HEK293 (cell line): ENCODE measurements at regions of chr1 and their contacts with region 1.

Region 1: DNA sequence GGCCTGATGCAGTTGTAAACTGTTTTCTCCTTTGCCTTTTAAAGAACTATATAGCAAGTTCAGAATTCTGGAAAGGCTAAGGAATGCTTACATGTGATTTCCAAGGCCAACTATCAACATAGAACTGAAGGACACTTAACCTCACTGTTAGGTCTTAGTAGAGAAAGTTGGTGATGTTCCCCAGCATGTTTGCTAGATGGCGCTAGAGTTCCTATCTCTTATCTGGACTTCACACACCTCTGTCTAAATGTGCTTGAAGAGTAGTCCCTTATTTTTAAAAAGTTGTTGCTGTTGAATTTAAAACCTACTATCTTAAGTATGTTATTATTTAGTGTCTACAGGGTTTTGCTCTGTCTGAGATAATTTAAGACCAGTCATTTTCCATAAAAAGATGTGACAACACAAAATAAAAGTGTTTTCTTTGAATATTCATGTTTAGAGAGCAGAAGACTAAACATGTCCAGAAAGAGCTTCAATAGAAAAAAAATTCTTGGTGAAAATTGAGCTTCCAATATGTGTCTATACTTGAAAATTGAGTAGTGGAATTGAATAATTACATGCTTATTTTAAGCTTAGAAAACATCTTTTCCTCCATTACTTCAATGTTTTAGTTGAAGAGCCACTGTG is 237.3 kb downstream of the S1PR1 start:
- H3K4me3 ChIP-seq: no peak overlapping the region
- H3K27ac ChIP-seq: no peak overlapping the region
- H3K4me1 ChIP-seq: no peaks in the 10 kb centered on the region
- CTCF ChIP-seq: no peak

Region 2: DNA sequence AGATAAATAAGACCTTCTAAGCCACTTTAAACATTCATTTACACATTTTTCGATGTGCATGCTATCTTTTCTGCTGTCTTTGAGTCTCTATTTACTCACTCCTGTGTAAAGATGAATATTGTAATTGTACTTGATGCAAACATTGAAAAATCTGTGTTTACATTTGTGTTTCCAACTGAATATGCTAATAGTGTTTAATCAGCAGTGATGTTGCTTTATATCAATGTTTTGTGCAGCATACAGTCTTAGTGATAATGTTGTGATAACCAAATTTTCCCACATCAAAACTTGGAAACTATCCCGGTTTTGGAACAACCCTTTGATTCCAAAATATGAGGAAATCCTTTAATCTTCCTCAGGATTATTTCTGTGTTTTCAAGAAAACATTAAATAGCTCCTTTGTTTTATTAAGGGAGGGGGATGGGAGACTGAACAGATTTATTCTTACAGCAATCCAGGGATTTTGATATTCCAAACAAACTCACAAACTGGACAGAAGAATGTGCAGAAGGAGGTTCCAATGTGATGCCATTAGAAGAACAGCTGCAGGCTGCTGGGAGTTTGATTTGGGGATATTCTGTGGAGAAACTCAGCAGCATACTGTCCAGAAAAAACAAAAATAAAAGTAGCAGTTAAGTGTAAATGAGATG is 10.7 kb after region 1 on chr1:
- CTCF ChIA-PET with region 1: interaction called, 35 read pairs
- POLR2A ChIA-PET with region 1: no interaction called
- H3K4me3 ChIP-seq: no peak overlapping the region
- H3K27ac ChIP-seq: no peak overlapping the region
- H3K4me1 ChIP-seq: no peaks in the 10 kb centered on the region; the same call in 1 of the 2 replicates
- CTCF ChIP-seq: no peak